AG04450 (cell line): ENCODE measurements at regions of chr1 and their contacts with region 1.

Region 1: GRCh38 chr1:160085686-160086455 is 4.5 kb downstream of the KCNJ9 start:
- DNase-seq: peak; percentile 32
- H3K4me3 ChIP-seq: no peak overlapping the region
- H3K27ac ChIP-seq: no peak overlapping the region
- H3K27me3 ChIP-seq: peaks cover 43% of the 10 kb centered on the region
- CTCF ChIP-seq: peak; percentile 87

Region 2: DNA sequence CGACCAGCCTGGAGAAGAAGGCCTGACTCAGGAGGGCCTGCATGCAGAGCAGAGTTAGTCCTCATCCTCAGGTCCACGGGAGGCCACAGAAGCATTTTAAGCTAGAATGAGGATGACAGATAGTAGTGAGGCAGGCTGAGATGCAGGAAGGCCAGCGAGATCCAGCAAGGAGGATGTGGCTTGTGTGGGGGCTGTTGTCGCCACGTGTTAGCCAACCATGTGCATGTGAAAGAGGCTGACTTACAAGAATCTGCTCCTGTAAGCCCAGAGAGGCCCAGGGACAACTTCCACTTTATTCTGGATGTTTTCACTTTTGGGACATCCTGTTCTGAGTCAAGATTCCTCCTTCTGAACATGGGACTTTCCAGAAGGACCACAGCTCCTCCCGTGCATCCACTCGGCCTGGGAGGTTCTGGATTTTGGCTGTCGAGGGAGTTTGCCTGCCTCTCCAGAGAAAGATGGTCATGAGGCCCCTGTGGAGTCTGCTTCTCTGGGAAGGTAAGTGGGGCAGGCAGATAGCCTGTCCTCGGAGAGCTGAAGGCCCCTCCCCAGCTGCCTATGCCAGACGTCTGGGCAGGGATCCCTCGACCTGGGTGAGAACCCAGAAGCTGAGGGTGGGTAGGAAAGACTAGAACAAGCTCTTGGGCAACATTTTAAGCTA is 259.3 kb before region 1 on chr1 and contains the start of gene SLAMF8:
- CTCF ChIA-PET with region 1: no interaction called
- POLR2A ChIA-PET with region 1: no interaction called
- DNase-seq: no peak
- H3K4me3 ChIP-seq: no peak within 1 kb of the TSS
- H3K27ac ChIP-seq: no peak within 1 kb of the TSS
- H3K27me3 ChIP-seq: peaks cover 8% of the 10 kb centered on the region
- CTCF ChIP-seq: no peak
- polyA plus RNA-seq, gene SLAMF8: not detected in 2 replicates

Region 3: GRCh38 chr1:160058087-160058486 is 27.8 kb before region 1 on chr1:
- CTCF ChIA-PET with region 1: interaction called, 13 read pairs
- POLR2A ChIA-PET with region 1: no interaction called
- DNase-seq: no peak
- H3K4me3 ChIP-seq: no peak overlapping the region
- H3K27ac ChIP-seq: no peak overlapping the region
- H3K27me3 ChIP-seq: peaks cover 50% of the 10 kb centered on the region
- CTCF ChIP-seq: 0 out of 2 replicates have a peak, but pooled peaks have one; percentile 7

Region 4: DNA sequence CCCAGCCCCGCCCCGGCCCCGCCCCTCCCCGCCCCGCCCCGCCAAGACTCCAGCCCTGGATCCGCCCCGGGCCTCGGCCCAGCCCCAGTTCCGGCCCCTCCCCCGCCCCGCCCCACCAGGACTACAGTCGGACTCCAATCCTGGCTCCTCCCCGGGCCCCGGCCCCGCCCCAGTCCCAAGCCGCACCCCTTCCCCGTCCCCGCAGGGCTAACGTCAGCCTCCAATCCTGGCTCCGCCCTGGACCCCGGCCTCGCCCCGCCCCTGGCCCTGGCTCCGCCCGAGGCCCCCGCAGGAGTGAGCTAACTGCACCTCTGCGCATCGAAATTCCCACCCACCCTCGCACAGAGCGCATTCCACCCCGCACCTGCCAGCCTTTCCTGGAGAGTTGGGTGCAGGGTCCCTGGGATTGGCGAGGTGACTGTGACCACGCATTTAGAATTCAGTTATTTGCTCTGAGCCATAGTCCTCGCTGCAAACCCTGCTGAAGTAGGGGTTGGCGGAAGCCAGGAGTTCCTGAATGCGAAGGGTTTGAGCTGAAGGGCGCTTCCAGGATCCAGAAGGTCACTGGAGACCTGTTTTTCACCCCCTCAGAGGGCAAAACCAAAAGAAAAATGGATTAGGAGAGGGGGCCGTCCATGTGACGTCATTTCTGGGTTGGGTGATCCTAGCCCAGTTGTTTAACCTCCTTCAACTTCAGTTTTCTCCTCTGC is 13.1 kb after region 1 on chr1:
- CTCF ChIA-PET with region 1: interaction called, 49 read pairs
- POLR2A ChIA-PET with region 1: no interaction called
- DNase-seq: peak; percentile 79
- H3K4me3 ChIP-seq: peak overlapping the region; percentile 78
- H3K27ac ChIP-seq: peak overlapping the region; percentile 47
- H3K27me3 ChIP-seq: no peaks in the 10 kb centered on the region
- CTCF ChIP-seq: no peak

Region 5: DNA sequence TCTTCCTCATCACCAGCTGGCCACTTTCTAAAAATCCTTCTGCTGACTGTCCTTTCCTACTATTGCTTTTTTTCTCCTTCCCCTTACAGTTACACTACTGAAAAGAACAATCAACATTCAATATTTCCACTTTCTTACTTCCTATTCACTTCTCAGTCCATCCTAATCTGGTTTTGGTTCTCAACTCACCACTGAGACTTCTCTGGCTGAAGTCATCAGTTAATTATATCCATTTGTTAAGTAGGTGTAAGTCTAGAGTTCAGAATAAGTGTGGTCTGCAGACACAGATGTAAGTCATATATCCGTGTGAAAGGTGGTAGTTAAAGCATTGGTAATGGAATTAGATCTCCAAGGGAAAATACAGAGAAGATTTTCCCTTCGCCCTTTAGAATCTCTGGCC is 140.8 kb after region 1 on chr1:
- CTCF ChIA-PET with region 1: interaction called, 64 read pairs
- POLR2A ChIA-PET with region 1: no interaction called
- DNase-seq: no peak
- H3K4me3 ChIP-seq: no peak overlapping the region
- H3K27ac ChIP-seq: no peak overlapping the region
- H3K27me3 ChIP-seq: no peaks in the 10 kb centered on the region
- CTCF ChIP-seq: no peak

Region 6: GRCh38 chr1:160376525-160377131 is 290.8 kb after region 1 on chr1:
- CTCF ChIA-PET with region 1: interaction called, 49 read pairs
- POLR2A ChIA-PET with region 1: no interaction called
- DNase-seq: peak; percentile 37
- H3K4me3 ChIP-seq: no peak overlapping the region
- H3K27ac ChIP-seq: no peak overlapping the region
- H3K27me3 ChIP-seq: peaks cover 2% of the 10 kb centered on the region
- CTCF ChIP-seq: peak; percentile 99